AG04450 (cell line): ENCODE measurements at regions of chr5 and their contacts with region 1.

Region 1: GRCh38 chr5:58460732-58461286 is 923 bp upstream of the PLK2 start:
- DNase-seq: peak; percentile 65
- H3K4me3 ChIP-seq: peak overlapping the region; percentile 94
- H3K27ac ChIP-seq: peak overlapping the region; percentile 87
- H3K27me3 ChIP-seq: no peaks in the 10 kb centered on the region
- CTCF ChIP-seq: peak; percentile 83

Region 2: DNA sequence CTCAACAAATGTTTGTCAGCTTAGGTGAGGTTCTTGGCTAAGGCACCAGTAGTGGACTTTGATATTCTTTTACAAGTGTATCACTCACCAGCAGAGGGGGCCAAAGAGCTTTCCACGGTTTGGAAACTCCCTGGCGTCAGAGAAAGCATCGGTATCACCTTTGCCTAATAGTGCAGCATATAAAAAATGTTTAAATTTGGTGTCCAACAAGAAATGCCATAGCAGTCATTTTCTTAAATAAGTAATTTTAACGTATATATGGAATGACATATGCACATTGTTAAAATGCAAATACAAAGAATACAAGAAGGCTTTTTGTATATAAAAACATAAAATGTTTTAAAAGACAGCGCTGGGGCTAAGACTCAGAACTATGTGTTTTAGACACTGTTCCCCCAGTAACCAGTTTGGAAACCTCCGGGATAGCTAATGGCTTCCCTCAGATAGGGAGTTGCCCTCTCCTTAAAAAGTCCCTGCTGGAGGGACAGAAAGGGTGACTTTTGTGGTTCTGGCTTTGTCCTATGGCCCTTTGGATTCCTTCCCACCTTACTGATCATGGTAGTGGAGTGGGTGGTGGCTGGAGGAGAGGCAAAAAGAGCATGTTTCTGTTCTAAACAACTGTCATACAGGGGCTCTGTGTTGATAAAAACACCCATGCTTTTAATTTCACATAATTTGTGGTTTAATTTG is 1162.4 kb before region 1 on chr5:
- CTCF ChIA-PET with region 1: interaction called, 123 read pairs
- POLR2A ChIA-PET with region 1: interaction called, 9 read pairs
- DNase-seq: peak; percentile 73
- H3K4me3 ChIP-seq: no peak overlapping the region
- H3K27ac ChIP-seq: no peak overlapping the region
- H3K27me3 ChIP-seq: no peaks in the 10 kb centered on the region
- CTCF ChIP-seq: peak; percentile 88

Region 3: DNA sequence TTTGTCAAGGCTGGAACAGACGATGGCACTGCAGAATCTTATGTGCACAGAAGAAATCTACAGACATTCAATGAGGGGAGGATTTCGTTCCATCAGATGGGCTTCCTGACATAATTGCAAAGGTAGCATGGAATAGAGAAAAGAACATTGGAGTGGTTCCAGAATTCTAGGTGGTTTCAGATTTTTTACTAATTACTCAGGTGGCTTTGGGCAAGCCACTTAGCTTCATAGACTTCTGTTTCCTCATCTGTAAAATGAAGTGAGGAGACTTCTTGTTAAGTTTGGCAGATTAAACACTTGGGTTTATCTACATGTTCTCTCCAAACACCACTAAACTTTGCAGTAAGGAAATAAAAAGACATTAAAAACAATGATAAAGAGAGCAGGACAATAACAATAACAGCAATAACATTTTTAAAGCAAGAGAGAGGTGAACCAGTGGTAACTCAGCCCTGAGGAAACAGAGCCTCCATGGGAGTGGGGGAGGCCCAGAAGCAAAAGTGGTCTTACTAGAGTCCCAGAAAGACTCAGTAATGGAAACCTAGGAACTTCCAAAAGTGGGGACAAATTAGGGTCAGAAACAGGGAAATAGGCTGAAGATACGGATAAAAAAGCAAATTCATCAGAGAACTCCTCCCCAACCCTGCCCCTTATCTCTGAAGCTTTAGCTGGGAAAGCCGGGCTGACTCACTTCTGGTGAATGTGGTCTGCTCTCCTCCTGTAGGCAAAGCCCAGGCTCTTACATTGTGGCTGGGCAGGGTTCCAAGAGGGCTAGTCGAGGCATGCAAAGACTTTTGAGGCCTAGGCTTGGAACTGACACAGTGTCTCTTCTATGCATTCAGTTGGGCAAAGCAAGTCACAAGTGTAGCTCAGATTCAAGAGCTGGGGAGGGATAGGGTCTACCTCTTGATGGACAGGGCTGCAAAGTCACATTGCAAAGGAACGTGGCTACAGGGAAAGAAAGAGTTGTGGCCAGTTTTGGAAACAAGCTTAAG is 966.4 kb before region 1 on chr5:
- CTCF ChIA-PET with region 1: interaction called, 24 read pairs
- POLR2A ChIA-PET with region 1: interaction called, 4 read pairs
- DNase-seq: peak; percentile 95
- H3K4me3 ChIP-seq: no peak overlapping the region
- H3K27ac ChIP-seq: peak overlapping the region; percentile 89
- H3K27me3 ChIP-seq: no peaks in the 10 kb centered on the region
- CTCF ChIP-seq: peak; percentile 20; the same call in 1 of the 2 replicates

Region 4: GRCh38 chr5:57650360-57651069 is 810.3 kb before region 1 on chr5:
- CTCF ChIA-PET with region 1: interaction called, 11 read pairs
- POLR2A ChIA-PET with region 1: interaction called, 4 read pairs
- DNase-seq: no peak
- H3K4me3 ChIP-seq: no peak overlapping the region
- H3K27ac ChIP-seq: no peak overlapping the region
- H3K27me3 ChIP-seq: no peaks in the 10 kb centered on the region
- CTCF ChIP-seq: peak; percentile 56

Region 5: DNA sequence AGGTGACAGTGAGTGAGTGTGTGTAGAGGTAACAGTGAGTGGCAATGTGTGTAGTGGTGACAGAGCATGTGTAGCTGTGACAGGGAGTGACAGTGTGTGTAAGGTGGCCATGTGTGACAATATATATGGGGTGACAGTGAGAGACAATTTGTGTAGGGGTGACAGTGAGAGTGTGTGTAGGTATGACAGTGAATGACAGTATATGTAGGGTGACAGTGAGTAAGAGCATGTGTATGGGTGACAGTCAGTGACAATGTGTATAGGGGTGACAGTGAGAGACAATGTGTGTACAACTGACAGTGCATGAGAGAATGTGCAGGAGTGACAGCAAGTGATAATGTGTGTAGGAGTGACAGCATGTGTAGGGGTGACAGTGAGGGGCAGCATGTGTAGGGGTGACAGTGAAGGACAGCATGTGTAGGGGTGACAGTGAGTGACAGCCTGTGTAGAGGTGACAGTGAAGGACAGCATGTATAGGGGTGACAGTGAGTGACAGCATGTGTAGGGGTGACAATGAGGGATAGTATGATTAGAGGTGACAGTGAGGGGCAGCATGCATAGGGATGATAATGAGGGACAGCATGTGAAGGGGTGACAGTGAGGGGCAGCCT is 20.4 kb after region 1 on chr5:
- CTCF ChIA-PET with region 1: no interaction called
- POLR2A ChIA-PET with region 1: no interaction called
- DNase-seq: no peak
- H3K4me3 ChIP-seq: no peak overlapping the region
- H3K27ac ChIP-seq: no peak overlapping the region
- H3K27me3 ChIP-seq: peaks cover 5% of the 10 kb centered on the region
- CTCF ChIP-seq: no peak